Naive thymus-derived CD4-positive, alpha-beta T cell (primary cell): ENCODE measurements at regions of chrX and their contacts with region 1.

Region 1: GRCh38 chrX:49754233-49754857 is 58.6 kb upstream of the PAGE1 start:
- DNase-seq: peak; percentile 6 to 52 (median 42)
- ATAC-seq: peak; percentile 85
- H3K4me3 ChIP-seq: no peak overlapping the region
- H3K4me3 Mint-ChIP-seq: peak overlapping the region in 2 of 10 donors; percentile 37 to 50
- H3K27ac ChIP-seq: no peak overlapping the region
- H3K27ac Mint-ChIP-seq: no peak overlapping the region
- H3K4me1 ChIP-seq: no peaks in the 10 kb centered on the region
- H3K4me1 Mint-ChIP-seq: no peaks in the 10 kb centered on the region
- H3K27me3 ChIP-seq: no peaks in the 10 kb centered on the region
- H3K27me3 Mint-ChIP-seq: peaks cover 0 to 31% (median 4%) of the 10 kb centered on the region in 5 donors

Region 2: GRCh38 chrX:49137492-49137891 is 616.9 kb before region 1 on chrX:
- CTCF ChIA-PET with region 1: no interaction called
- POLR2A ChIA-PET with region 1: no interaction called
- intact Hi-C with region 1: loop called in 1 of 2 experiments (anchors 5 kb)
- DNase-seq: no peak
- ATAC-seq: no peak
- H3K4me3 ChIP-seq: no peak overlapping the region
- H3K4me3 Mint-ChIP-seq: no peak overlapping the region
- H3K27ac ChIP-seq: no peak overlapping the region
- H3K27ac Mint-ChIP-seq: no peak overlapping the region
- H3K4me1 ChIP-seq: no peaks in the 10 kb centered on the region
- H3K4me1 Mint-ChIP-seq: peaks cover 0 to 2% (median 0%) of the 10 kb centered on the region in 7 donors
- H3K27me3 ChIP-seq: no peaks in the 10 kb centered on the region
- H3K27me3 Mint-ChIP-seq: no peaks in the 10 kb centered on the region

Region 3: DNA sequence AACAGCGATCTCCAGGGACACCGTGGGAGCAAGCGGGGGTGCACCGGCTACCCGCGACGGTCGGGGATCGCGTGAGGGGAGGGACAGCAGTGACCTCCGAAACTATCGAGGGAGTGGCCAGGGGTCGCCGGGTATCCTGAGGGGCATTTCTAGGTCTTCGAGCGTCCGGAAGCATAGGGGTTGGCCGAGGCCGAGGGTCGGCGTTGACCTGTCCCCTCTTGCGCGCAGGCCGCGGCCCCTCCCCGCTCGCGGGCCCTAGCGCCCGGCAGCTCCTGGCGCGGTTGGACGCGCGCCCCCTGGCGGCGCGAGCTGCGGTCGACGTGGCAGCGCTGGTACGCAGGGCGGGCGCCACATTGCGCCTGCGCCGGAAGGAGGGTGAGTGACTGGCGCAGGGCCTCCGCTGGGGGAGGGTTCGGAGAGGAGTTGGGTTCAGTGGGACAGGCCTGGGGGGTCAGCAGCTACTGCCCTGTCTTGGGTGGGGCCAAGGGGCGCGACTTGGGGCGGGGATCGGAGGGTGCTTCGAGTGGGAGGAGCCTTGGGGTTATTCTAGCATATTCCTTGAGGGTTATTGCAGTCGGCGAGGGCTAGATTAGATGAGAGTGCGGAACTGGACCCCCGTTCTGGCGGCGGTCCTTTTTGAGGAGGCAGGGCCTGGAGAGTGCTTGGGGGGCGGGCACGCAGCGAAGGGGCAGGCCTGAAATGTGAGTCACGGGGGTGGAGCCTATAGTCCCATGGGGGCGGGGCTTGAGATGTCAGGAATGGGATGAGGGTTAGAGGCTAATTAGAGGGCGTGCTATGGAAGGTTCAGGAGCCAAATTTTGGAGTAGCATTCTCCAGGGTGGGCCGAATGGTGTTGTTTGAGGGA is 590.6 kb before region 1 on chrX:
- CTCF ChIA-PET with region 1: no interaction called
- POLR2A ChIA-PET with region 1: interaction called, 3 read pairs
- intact Hi-C with region 1: loop called in 1 of 2 experiments (anchors 1 kb)
- DNase-seq: peak; percentile 71 to 84 (median 80)
- ATAC-seq: peak; percentile 74
- H3K4me3 ChIP-seq: peak overlapping the region; percentile 50
- H3K4me3 Mint-ChIP-seq: peak overlapping the region; percentile 72 to 84 (median 81)
- H3K27ac ChIP-seq: peak overlapping the region; percentile 74
- H3K27ac Mint-ChIP-seq: peak overlapping the region; percentile 79 to 97 (median 92)
- H3K4me1 ChIP-seq: peaks cover 14 to 16% of the 10 kb centered on the region in 2 donors
- H3K4me1 Mint-ChIP-seq: peaks cover 13 to 33% (median 26%) of the 10 kb centered on the region in 7 donors
- H3K27me3 ChIP-seq: no peaks in the 10 kb centered on the region
- H3K27me3 Mint-ChIP-seq: peaks cover 0 to under 1% (median 0%) of the 10 kb centered on the region in 5 donors

Region 4: DNA sequence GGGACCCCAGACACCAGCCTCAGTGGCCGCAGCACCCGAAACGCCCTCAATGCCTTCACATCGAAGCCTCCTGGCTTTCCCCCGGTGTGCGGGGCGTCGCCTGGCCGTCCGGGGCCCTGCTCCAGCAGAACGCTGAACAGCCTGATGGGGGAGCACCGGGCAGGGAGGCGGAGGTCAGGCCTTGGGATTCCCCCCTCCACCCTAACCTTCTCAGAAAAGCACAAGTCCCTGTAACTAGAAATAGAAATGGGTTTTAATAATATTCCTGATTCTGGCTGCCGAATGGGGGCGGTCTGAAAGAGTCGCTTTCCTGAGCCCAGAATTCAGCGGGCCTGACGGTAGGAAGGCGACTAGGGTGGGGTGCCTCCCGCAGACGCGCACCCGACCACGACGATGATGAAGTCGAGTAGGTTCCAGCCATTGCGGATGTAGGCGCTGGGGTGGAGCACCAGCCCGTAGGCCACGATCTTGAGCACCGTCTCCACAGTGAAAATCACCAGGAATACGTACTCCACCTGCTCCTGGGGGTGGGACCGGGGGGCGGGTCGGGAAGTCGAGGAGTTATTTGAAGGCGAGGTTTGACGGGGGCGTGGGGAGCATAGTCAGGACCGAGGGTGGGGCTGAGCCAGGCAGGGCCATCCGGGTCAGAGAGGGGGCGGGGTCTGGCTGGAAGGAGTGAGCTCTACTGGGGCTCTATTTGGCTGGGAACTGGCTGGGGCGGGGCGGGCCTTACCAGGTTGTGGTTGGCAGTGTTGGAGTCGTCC is 523.7 kb before region 1 on chrX:
- CTCF ChIA-PET with region 1: no interaction called
- POLR2A ChIA-PET with region 1: no interaction called
- intact Hi-C with region 1: loop called in 1 of 2 experiments (anchors 2 kb)
- DNase-seq: peak; percentile 19 to 63 (median 44)
- ATAC-seq: peak; percentile 78
- H3K4me3 ChIP-seq: peak overlapping the region; percentile 28
- H3K4me3 Mint-ChIP-seq: peak overlapping the region; percentile 76 to 87 (median 80)
- H3K27ac ChIP-seq: peak overlapping the region; percentile 71
- H3K27ac Mint-ChIP-seq: peak overlapping the region; percentile 67 to 94 (median 88)
- H3K4me1 ChIP-seq: peaks cover 0 to 4% of the 10 kb centered on the region in 2 donors
- H3K4me1 Mint-ChIP-seq: peaks cover 6 to 26% (median 21%) of the 10 kb centered on the region in 7 donors
- H3K27me3 ChIP-seq: no peaks in the 10 kb centered on the region
- H3K27me3 Mint-ChIP-seq: no peaks in the 10 kb centered on the region

Region 5: DNA sequence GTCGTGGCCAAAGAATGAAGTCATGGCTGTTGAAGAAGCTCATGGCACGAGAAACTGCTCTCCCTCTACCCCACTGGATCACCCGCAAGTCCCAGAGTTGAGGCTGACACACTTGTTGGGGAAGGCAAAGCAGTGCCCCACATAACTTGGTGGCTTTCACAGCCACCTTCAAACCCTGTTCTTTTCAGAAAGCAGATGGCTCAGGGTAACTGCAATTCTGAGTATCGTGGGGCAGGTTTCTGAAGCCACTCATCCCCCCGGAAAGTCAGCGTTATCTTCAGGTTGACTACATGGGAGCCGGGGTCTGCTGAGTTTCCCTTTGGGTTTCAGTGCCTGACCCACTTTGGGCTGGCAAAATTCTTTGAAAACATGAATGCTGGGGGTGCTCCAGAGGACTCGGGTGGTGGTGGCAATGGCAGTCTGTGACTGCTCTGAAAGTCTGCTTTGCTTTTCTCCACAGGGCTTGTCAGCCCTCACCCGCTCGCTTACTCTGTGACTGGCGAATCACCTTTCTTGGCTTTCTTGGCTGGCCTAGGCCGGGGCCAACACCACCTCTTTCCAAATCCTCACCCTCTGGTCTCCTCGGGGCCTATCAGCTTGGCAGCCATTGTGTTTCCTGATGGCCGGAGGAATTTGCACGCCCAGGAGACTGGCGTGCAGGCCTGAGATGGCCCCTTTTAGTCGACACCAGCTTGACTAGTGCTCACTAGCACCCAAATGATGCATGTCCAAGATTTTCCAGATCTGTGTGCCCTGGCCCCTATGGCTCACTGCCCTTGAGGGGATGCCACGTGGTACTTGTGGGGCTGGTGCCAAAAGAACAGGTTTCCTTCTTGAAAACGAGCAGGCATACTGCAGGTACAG is 477.4 kb before region 1 on chrX:
- CTCF ChIA-PET with region 1: no interaction called
- POLR2A ChIA-PET with region 1: no interaction called
- intact Hi-C with region 1: loop called in 1 of 2 experiments (anchors 5 kb)
- DNase-seq: no peak
- ATAC-seq: no peak
- H3K4me3 ChIP-seq: no peak overlapping the region
- H3K4me3 Mint-ChIP-seq: peak overlapping the region; percentile 32 to 91 (median 76)
- H3K27ac ChIP-seq: peak overlapping the region; percentile 50
- H3K27ac Mint-ChIP-seq: peak overlapping the region; percentile 76 to 94 (median 88)
- H3K4me1 ChIP-seq: peaks cover 61 to 77% of the 10 kb centered on the region in 2 donors
- H3K4me1 Mint-ChIP-seq: peaks cover 39 to 87% (median 78%) of the 10 kb centered on the region in 7 donors
- H3K27me3 ChIP-seq: no peaks in the 10 kb centered on the region
- H3K27me3 Mint-ChIP-seq: no peaks in the 10 kb centered on the region

Region 6: DNA sequence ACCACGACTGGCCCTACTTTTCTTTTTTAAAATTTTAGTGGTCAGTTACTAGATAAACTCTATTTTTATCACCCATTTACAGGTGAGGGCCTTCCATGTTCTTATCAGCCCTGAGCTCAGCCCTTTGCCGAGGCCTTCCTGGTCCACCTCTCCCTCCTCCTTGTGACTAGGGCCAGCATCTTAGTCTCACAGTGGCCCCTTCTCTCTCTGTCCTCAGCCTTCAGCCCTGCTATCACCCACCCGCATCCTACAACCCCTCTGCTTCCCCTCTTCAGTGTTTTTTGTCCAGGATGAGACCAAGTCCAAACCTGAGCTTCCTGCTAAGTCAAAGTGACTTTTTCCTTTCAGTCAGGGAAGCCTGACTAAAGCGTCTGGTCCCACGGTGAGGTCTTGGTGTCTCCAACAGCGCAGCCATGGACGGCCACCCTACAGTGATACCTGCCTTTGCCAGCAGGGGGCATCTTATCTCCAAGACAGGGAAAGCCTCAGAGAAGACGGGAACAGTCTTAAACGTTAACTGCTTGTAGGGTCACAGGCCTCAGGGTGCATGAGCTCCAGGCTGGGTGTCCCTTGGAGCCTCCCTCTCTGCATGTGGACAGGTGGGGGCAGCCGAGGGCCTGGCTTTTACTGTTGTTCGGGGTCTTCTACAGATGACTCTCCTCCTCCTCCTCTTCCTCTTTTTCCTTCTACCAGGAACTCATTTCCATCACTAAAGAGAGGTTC is 462.6 kb before region 1 on chrX:
- CTCF ChIA-PET with region 1: interaction called, 3 read pairs
- POLR2A ChIA-PET with region 1: interaction called, 3 read pairs
- intact Hi-C with region 1: loop called in 1 of 2 experiments (anchors 1 kb)
- DNase-seq: peak; percentile 38 to 72 (median 57)
- ATAC-seq: peak; percentile 82
- H3K4me3 ChIP-seq: no peak overlapping the region
- H3K4me3 Mint-ChIP-seq: peak overlapping the region in 6 of 10 donors; percentile 7 to 77 (median 62)
- H3K27ac ChIP-seq: no peak overlapping the region
- H3K27ac Mint-ChIP-seq: peak overlapping the region in 6 of 9 donors; percentile 37 to 95 (median 82)
- H3K4me1 ChIP-seq: peaks cover 14 to 28% of the 10 kb centered on the region in 2 donors
- H3K4me1 Mint-ChIP-seq: peaks cover 9 to 48% (median 38%) of the 10 kb centered on the region in 7 donors
- H3K27me3 ChIP-seq: no peaks in the 10 kb centered on the region
- H3K27me3 Mint-ChIP-seq: peaks cover 0 to 9% (median 0%) of the 10 kb centered on the region in 5 donors

Region 7: DNA sequence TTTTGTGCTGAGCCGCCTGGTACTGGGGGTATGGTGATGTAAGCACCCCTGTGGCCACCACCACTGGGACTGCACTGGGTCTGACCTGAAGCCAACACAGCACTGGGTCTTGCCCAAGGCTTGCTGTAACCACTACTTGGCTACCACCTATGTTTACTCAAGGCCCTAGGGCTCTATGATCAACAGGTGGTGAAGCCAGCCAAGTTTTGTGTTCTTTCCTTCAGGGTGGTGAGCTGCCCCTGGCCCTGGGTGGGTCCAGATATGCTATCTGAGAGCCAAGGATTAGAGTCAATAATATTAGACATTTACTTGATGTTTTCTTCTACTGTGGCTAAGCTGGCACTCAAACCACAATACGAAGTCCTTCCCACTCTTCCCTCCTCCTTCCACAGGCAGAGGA is 19.6 kb after region 1 on chrX:
- CTCF ChIA-PET with region 1: no interaction called
- POLR2A ChIA-PET with region 1: no interaction called
- intact Hi-C with region 1: no loop called
- DNase-seq: no peak
- ATAC-seq: no peak
- H3K4me3 ChIP-seq: no peak overlapping the region
- H3K4me3 Mint-ChIP-seq: no peak overlapping the region
- H3K27ac ChIP-seq: no peak overlapping the region
- H3K27ac Mint-ChIP-seq: no peak overlapping the region
- H3K4me1 ChIP-seq: no peaks in the 10 kb centered on the region
- H3K4me1 Mint-ChIP-seq: no peaks in the 10 kb centered on the region
- H3K27me3 ChIP-seq: no peaks in the 10 kb centered on the region
- H3K27me3 Mint-ChIP-seq: peaks cover 8 to 26% (median 22%) of the 10 kb centered on the region in 5 donors